Endothelial cell of umbilical vein (primary cell): ENCODE measurements at regions of chr7 and their contacts with region 1.

Region 1: DNA sequence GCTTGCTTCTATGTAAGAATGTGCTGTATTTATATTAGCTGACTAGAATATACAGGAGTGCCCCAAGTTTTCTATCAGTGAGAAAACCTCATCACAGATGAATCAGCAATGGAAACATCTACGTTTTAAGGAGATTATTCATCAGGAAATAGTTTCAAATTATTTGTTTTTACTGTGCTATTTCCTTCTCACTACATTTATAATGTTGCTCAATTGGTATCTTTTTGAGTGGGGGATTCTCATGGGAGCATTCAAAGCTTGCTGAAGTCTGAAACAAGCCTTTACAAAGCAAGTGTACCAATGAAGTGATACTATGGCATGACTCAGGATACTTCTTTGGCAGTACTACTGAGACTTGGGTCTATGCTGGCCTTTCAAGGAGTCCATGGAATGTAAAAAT is 191.1 kb upstream of the SLC26A5 start:
- DNase-seq: peak; percentile 66
- H3K4me3 ChIP-seq: no peak overlapping the region
- H3K27ac ChIP-seq: peak overlapping the region; percentile 50
- H3K4me1 ChIP-seq: peaks cover 25% of the 10 kb centered on the region
- H3K27me3 ChIP-seq: no peaks in the 10 kb centered on the region
- CTCF ChIP-seq: no peak
- POLR2A ChIP-seq: no peak

Region 2: GRCh38 chr7:103660455-103661371 is 23.6 kb after region 1 on chr7:
- CTCF ChIA-PET with region 1: no interaction called
- POLR2A ChIA-PET with region 1: no interaction called
- dilution Hi-C with region 1: no loop called
- intact Hi-C with region 1: loop called (anchors 1 kb)
- DNase-seq: peak; percentile 79
- H3K4me3 ChIP-seq: no peak overlapping the region
- H3K27ac ChIP-seq: no peak overlapping the region
- H3K4me1 ChIP-seq: peaks cover 3% of the 10 kb centered on the region
- H3K27me3 ChIP-seq: no peaks in the 10 kb centered on the region
- CTCF ChIP-seq: no peak
- POLR2A ChIP-seq: no peak

Region 3: GRCh38 chr7:103718482-103719415 is 81.7 kb after region 1 on chr7:
- CTCF ChIA-PET with region 1: no interaction called
- POLR2A ChIA-PET with region 1: no interaction called
- dilution Hi-C with region 1: no loop called
- intact Hi-C with region 1: loop called (anchors 2 kb)
- DNase-seq: peak; percentile 77
- H3K4me3 ChIP-seq: no peak overlapping the region
- H3K27ac ChIP-seq: peak overlapping the region; percentile 85
- H3K4me1 ChIP-seq: peaks cover 24% of the 10 kb centered on the region
- H3K27me3 ChIP-seq: no peaks in the 10 kb centered on the region
- CTCF ChIP-seq: no peak
- POLR2A ChIP-seq: no peak